Astrocyte of the cerebellum (primary cell): ENCODE measurements at regions of chr2 and their contacts with region 1.

Region 1: GRCh38 chr2:13950761-13951160 is 681.8 kb upstream of the LRATD1 start:
- DNase-seq: no peak
- H3K4me3 ChIP-seq: no peak overlapping the region
- CTCF ChIP-seq: no peak

Region 2: GRCh38 chr2:14016289-14016955 is 65.7 kb after region 1 on chr2:
- in situ Hi-C with region 1: loop called (anchors 10 kb)
- DNase-seq: peak; percentile 77
- H3K4me3 ChIP-seq: no peak overlapping the region
- CTCF ChIP-seq: no peak

Region 3: DNA sequence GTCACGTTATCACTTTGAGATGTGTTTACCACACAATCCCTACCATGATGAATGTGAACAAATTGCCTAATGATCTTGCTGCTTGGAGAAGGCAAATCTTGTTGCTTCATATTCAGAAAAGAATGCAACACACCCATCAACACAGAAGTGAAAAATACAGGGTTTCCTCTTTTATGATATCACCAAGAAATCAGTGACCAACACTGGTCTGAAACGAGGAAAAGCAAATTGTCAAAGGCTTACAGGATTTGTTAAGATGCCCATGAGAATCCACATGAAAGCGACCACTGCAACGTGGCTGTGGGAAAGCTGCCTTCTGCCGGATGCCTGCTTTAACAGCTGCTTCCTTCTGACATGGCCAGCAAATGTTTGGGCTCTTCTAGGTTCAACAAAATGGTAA is 284.1 kb after region 1 on chr2:
- in situ Hi-C with region 1: no loop called
- DNase-seq: no peak
- H3K4me3 ChIP-seq: no peak overlapping the region
- CTCF ChIP-seq: no peak

Region 4: DNA sequence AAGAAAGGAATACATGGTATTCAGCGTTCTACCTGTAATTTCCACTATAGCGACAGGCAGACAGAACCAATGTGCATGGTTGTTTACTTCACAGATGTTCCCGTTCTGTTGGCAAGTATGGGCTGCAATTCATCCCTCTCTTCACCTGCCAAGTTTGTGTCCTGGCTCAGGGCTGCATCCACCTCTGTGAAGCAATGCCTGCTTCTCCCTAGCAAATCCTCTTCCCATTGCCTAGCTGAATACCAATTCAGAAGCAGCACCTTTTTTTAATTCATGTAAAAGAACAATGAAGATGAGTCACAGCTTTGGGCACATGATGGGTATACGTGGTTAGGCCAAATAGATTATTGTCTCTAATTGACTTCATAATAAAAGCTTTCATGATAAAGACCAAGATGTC is 627.1 kb after region 1 on chr2:
- in situ Hi-C with region 1: loop called (anchors 10 kb)
- DNase-seq: no peak
- H3K4me3 ChIP-seq: no peak overlapping the region
- CTCF ChIP-seq: no peak